Gastrocnemius medialis (tissue), 4 donors: ENCODE measurements at regions of chr10 and their contacts with region 1.

Region 1: GRCh38 chr10:96129387-96130325 is at the start of gene ZNF518A:
- DNase-seq: peak; percentile 77 to 87
- ATAC-seq: peak; percentile 94 to 96
- H3K4me3 ChIP-seq: peak within 1 kb of the TSS; percentile 81 to 88 (median 83)
- H3K27ac ChIP-seq: peak within 1 kb of the TSS; percentile 78 to 86 (median 82)
- H3K4me1 ChIP-seq: peaks cover 9 to 12% of the 10 kb centered on the region in 2 donors
- H3K27me3 ChIP-seq: peaks cover 0 to 47% (median 24%) of the 10 kb centered on the region in 3 donors
- CTCF ChIP-seq: no peak
- POLR2A ChIP-seq: no peak
- total RNA-seq, gene ZNF518A: 4.9 to 11.8 (median 8.2) TPM

Region 2: GRCh38 chr10:95907456-95908253 is 222.0 kb before region 1 on chr10 and contains the start of gene CC2D2B:
- in situ Hi-C with region 1: no loop called
- intact Hi-C with region 1: loop called (anchors 10 kb)
- DNase-seq: peak; percentile 56 to 72
- ATAC-seq: peak; percentile 94 to 97
- H3K4me3 ChIP-seq: peak within 1 kb of the TSS; percentile 75 to 90 (median 84)
- H3K27ac ChIP-seq: peak within 1 kb of the TSS; percentile 86 to 94 (median 88)
- H3K4me1 ChIP-seq: peaks cover 0 to 5% of the 10 kb centered on the region in 2 donors
- H3K27me3 ChIP-seq: no peaks in the 10 kb centered on the region
- CTCF ChIP-seq: no peak
- POLR2A ChIP-seq: no peak
- total RNA-seq, gene CC2D2B: 0.13 to 0.36 (median 0.31) TPM in 3 of 4 donors, not detected in the other

Region 3: GRCh38 chr10:96073722-96074121 is 55.9 kb before region 1 on chr10:
- in situ Hi-C with region 1: no loop called
- intact Hi-C with region 1: no loop called
- DNase-seq: no peak
- ATAC-seq: no peak
- H3K4me3 ChIP-seq: no peak overlapping the region
- H3K27ac ChIP-seq: no peak overlapping the region
- H3K4me1 ChIP-seq: no peaks in the 10 kb centered on the region
- H3K27me3 ChIP-seq: no peaks in the 10 kb centered on the region
- CTCF ChIP-seq: no peak
- POLR2A ChIP-seq: no peak

Region 4: DNA sequence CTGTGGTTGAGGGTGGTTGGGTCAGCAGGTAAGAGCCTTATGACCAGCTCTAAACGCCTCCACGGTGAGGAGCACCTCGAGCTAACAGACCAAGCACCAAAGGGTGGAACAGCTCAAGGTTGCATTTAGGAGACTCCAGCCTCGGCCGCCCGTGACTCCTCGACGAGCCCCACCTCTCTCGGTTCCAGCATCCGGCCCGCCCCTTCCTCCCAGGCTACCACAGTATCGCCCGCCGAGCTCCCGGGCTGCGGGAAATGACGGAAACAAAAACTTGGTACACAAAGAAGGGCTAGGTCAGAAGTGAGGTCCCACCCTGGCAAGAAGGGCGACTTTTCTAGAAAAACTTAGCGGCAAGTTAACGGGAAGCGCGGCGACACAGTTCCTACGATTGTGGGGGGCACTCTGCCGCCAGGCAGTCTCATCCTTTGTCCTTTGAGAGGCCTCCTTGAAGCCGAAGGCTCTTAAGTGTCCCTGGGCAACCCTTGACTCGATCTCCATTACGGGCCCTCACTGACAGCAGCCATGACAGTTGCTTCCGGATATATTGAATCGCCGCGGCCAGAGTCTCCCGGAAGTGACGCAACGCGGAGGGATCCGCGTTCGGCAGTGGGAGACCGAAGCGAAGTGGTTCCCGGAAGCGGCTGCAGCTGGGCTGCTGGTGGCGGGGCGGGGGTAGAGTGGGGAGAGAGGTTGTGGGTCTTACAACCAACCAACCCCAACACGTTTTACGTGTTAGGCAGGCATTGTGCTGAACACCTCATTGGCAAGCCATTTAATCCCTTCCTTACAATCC is 39.8 kb before region 1 on chr10:
- in situ Hi-C with region 1: loop called in 3 of 4 experiments (anchors 5 kb)
- intact Hi-C with region 1: loop called (anchors 1 kb)
- DNase-seq: peak; percentile 62 to 89
- ATAC-seq: peak; percentile 89 to 99
- H3K4me3 ChIP-seq: peak overlapping the region; percentile 53 to 80 (median 70)
- H3K27ac ChIP-seq: peak overlapping the region; percentile 61 to 84 (median 70)
- H3K4me1 ChIP-seq: peaks cover 6 to 7% of the 10 kb centered on the region in 2 donors
- H3K27me3 ChIP-seq: peaks cover 21 to 42% (median 25%) of the 10 kb centered on the region in 3 donors
- CTCF ChIP-seq: no peak
- POLR2A ChIP-seq: peak in 1 of 2 donors; percentile 22

Region 5: DNA sequence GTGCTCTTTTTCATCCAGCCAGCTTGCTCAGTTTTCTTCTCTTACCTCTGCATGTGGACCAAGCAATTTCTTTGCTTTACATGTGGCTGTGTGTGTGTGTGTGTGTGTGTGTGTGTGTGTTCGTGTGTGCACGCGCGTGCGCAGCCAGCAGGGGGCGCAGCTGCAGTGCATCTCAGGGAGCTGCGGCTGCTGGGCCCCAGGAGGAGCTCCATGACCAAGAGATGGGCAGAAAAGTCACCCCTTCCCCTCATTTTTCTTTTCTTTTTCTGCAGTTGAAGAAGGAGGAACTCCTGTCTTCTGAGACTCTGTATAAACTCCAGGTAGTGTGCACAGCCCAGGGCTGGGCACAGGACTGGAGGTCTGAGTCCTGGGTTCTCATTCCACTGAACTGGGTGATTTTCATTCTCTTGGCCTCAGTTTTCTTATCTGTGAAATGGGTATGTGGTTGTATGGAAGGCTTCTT is 99.9 kb after region 1 on chr10:
- in situ Hi-C with region 1: loop called in 1 of 4 experiments (anchors 25 kb)
- intact Hi-C with region 1: no loop called
- DNase-seq: peak; percentile 10 to 42
- ATAC-seq: peak in 1 of 2 donors; percentile 37
- H3K4me3 ChIP-seq: no peak overlapping the region
- H3K27ac ChIP-seq: no peak overlapping the region
- H3K4me1 ChIP-seq: no peaks in the 10 kb centered on the region
- H3K27me3 ChIP-seq: no peaks in the 10 kb centered on the region
- CTCF ChIP-seq: peak; percentile 74 to 80 (median 76)
- POLR2A ChIP-seq: no peak